ENCODE measurements at regions of chr2 and their contacts with region 1.

Region 1: GRCh38 chr2:38315707-38316333 is 61.3 kb downstream of the ATL2 start:
- DNase-seq: peak; percentile 82
- ATAC-seq: peak; percentile 77
- H3K4me3 ChIP-seq: no peak overlapping the region
- H3K27ac ChIP-seq: no peak overlapping the region
- H3K4me1 ChIP-seq: no peaks in the 10 kb centered on the region
- H3K27me3 ChIP-seq: no peaks in the 10 kb centered on the region
- CTCF ChIP-seq: peak; percentile 91

Region 2: DNA sequence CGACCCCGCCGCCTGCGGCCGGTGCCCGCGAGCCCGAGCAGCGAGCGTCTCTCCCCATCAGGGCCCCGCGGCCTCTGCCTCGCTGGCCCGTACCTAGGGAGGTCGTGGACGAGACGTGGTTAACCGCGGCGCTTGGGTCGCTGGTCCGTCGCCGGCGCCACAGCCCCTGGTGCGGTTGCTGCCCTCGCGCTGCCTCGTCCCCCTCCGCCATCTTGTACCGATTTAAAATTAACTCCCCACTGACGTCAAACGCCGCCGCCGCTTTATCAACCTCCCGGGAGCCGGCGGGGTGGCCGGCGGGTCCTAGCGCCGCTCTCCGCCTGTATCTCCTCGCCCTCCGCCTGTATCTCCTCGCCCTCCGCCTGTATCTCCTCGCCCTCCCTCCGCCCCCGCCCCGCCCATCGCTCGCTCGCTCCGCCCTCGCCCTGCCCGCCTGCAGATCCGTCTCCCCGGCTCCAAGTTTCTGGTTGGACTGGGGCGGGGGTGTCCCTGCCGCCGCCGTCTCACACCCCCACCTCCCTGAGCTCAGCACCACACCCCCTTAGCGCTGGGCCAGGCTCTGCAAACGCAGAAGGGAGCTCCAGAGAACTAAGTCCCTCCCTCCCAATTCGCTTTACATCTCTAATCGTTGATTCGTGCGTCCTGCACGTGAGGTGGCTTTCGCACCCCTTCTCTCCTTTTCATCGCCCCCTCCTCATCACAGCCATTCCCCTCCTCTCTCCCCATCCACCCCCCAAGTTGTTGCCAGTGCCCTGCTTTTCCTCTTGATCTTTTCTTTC is 61.4 kb after region 1 on chr2 and contains the start of gene ATL2:
- CTCF ChIA-PET with region 1: interaction called, 3 read pairs
- POLR2A ChIA-PET with region 1: no interaction called
- intact Hi-C with region 1: loop called (anchors 5 kb)
- DNase-seq: peak; percentile 93
- ATAC-seq: peak; percentile 74
- H3K4me3 ChIP-seq: peak within 1 kb of the TSS; percentile 74
- H3K27ac ChIP-seq: peak within 1 kb of the TSS; percentile 73
- H3K4me1 ChIP-seq: peaks cover 23% of the 10 kb centered on the region
- H3K27me3 ChIP-seq: no peaks in the 10 kb centered on the region
- CTCF ChIP-seq: no peak
- total RNA-seq, gene ATL2: 65.3 and 89.4 TPM in 2 replicates

Region 3: DNA sequence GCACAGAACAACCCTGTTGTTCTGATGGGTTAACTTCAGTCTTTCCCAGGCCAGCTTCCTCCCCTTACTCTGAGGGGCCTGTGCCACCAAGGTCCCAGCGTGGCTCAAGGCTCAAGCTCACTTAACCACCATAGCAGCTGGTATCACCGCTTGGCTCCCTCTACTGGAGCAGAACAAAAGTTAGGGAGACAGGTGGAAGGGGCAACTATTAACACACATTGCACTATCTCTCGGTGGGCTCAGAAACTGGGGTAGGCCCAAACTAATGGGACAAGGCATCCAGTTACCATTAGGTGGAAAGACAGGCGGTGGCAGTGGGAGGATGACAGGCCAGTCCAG is 149.9 kb after region 1 on chr2:
- CTCF ChIA-PET with region 1: interaction called, 4 read pairs
- POLR2A ChIA-PET with region 1: interaction called, 4 read pairs
- intact Hi-C with region 1: loop called (anchors 1 kb)
- DNase-seq: peak; percentile 63
- ATAC-seq: no peak
- H3K4me3 ChIP-seq: no peak overlapping the region
- H3K27ac ChIP-seq: no peak overlapping the region
- H3K4me1 ChIP-seq: peaks cover 33% of the 10 kb centered on the region
- H3K27me3 ChIP-seq: no peaks in the 10 kb centered on the region
- CTCF ChIP-seq: peak; percentile 81

Region 4: DNA sequence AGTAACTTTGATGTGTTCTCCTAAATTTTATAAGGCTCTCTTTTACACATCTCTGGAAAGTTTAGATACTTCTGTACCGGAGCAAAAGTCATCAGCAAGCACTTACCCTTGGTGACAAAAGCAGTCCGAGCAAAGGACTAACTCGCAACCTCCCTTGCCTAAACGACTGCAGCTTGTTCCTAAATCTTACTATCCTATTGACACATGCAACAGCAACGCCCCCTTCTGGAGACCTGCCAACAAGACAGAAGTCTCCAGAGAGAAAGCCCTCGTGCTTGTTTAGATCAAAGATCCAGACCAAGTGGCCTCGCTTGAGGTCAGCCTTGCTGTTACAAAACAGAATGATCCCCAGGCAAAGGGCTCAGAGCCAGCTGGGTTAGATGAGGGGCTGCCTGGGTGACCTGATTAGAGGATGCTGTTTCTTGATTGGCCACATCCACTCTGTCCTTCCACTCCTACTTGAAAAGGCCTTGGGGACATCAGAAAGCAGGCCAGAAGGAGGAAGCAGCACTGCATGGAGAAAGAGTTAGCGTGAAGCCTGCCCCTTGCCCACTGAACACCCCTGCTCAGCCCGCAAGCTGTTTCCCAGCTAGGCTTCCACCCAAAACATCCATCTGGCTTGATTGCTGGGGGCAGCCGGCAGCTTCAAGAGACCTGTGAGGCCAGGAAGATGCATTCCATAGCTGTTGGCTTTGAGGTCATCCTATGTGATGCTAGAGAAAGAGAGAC is 192.7 kb after region 1 on chr2:
- CTCF ChIA-PET with region 1: interaction called, 4 read pairs
- POLR2A ChIA-PET with region 1: interaction called, 3 read pairs
- intact Hi-C with region 1: loop called (anchors 10 kb)
- DNase-seq: peak; percentile 87
- ATAC-seq: peak; percentile 53; the same call in 1 of the 2 replicates
- H3K4me3 ChIP-seq: no peak overlapping the region
- H3K27ac ChIP-seq: no peak overlapping the region
- H3K4me1 ChIP-seq: peaks cover 14% of the 10 kb centered on the region
- H3K27me3 ChIP-seq: no peaks in the 10 kb centered on the region
- CTCF ChIP-seq: peak; percentile 85

Region 5: GRCh38 chr2:38581193-38582147 is 265.6 kb after region 1 on chr2:
- CTCF ChIA-PET with region 1: interaction called, 8 read pairs
- POLR2A ChIA-PET with region 1: no interaction called
- intact Hi-C with region 1: loop called (anchors 5 kb)
- DNase-seq: peak; percentile 86
- ATAC-seq: peak; percentile 74
- H3K4me3 ChIP-seq: no peak overlapping the region
- H3K27ac ChIP-seq: no peak overlapping the region
- H3K4me1 ChIP-seq: peaks cover 16% of the 10 kb centered on the region
- H3K27me3 ChIP-seq: no peaks in the 10 kb centered on the region
- CTCF ChIP-seq: peak; percentile 82

Region 6: DNA sequence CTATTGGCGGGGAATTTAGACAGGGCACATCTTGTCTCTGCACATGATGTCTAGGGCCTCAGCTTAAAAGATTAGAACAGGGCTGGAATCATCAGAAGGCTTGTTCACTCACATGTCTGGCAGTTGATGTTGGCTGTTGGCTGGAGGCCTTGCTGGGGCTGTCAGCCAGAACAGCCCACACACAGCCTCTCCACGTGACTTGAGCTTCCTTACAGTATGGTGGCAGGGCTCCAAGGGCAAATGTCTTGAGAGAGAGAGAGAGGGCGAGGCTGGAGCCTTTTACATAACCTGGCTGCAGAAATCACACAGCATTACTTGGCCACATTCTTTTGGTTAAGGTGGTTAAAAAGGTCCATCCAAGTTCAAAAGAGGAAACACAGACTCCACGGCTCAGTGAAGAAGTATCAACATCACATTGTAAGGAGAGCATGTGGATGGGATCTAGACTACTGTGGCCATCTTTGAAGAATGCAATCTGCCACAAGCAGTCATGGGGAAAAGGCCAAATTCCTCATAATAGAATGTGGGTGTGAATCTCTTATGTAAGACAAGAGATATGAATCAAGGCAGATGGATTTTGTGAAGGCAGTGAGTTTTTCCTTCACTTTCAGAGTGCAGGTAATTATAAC is 404.9 kb after region 1 on chr2:
- CTCF ChIA-PET with region 1: no interaction called
- POLR2A ChIA-PET with region 1: no interaction called
- intact Hi-C with region 1: loop called (anchors 5 kb)
- DNase-seq: peak; percentile 95
- ATAC-seq: peak; percentile 89
- H3K4me3 ChIP-seq: no peak overlapping the region
- H3K27ac ChIP-seq: peak overlapping the region; percentile 38
- H3K4me1 ChIP-seq: peaks cover 27% of the 10 kb centered on the region
- H3K27me3 ChIP-seq: no peaks in the 10 kb centered on the region
- CTCF ChIP-seq: no peak